Lower leg skin (tissue), 4 donors: ENCODE measurements at regions of chr18 and their contacts with region 1.

Region 1: DNA sequence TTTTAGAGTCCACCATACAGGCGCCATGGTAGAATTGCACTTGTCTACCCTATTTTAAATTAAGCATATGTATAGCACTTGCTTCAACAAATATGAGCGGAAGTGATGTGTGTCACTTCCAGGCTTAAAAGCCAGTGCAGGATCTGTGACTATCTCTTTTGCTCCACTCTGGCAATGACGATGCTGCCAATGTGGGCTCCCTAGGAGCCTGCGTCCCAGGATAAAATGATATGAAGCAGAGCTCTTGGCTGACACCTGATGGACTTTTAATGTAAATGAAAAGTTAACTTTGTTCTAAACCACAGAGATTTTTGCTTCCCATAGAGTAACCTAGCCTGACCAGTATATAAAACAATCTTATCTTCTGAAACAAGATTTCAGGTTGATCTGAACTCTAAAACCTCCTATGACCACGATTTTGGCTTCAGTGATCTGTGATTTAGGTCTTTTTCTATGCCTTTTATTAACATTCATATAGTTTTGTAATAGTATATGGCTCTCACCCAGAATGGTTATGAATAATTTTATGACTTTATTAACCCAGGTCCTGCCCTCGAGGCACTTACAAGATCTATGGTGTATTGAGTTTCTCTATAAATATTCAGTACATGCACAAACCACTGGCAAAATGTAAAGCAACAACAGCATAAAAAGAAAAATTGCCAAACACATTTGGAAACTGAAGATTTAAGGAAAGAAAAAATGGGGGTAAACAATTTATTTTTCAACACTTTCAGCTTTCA is 422.5 kb upstream of the PIK3C3 start:
- DNase-seq: no peak
- H3K4me3 ChIP-seq: no peak overlapping the region
- CTCF ChIP-seq: no peak
- POLR2A ChIP-seq: no peak

Region 2: GRCh38 chr18:41513438-41513837 is 19.1 kb before region 1 on chr18:
- intact Hi-C with region 1: loop called (anchors 2 kb)
- DNase-seq: no peak
- H3K4me3 ChIP-seq: no peak overlapping the region
- CTCF ChIP-seq: no peak
- POLR2A ChIP-seq: no peak

Region 3: GRCh38 chr18:41553716-41554115 is 21.2 kb after region 1 on chr18:
- intact Hi-C with region 1: no loop called
- DNase-seq: no peak
- H3K4me3 ChIP-seq: no peak overlapping the region
- CTCF ChIP-seq: no peak
- POLR2A ChIP-seq: no peak

Region 4: DNA sequence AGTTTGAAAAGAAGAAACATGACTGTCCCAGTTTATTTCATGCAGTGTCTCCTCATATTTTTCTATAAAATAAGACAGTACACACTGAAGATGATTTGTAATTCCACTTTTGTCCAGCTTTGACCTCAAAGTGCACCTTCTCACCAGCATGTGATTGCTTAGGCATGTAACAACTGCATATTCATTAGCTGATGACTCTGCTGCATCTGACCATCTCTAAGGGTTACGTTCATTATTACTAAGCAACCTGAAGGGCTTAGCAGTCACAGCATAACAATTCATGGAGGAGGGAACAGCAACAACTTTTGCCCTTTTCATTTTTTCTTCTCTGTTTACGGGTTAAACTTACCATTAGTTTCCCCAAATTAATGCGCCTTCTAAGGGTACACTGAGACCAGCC is 91.9 kb after region 1 on chr18:
- intact Hi-C with region 1: no loop called
- DNase-seq: no peak
- H3K4me3 ChIP-seq: no peak overlapping the region
- CTCF ChIP-seq: no peak
- POLR2A ChIP-seq: no peak